B cell (primary cell): ENCODE measurements at regions of chr16 and their contacts with region 1.

Region 1: DNA sequence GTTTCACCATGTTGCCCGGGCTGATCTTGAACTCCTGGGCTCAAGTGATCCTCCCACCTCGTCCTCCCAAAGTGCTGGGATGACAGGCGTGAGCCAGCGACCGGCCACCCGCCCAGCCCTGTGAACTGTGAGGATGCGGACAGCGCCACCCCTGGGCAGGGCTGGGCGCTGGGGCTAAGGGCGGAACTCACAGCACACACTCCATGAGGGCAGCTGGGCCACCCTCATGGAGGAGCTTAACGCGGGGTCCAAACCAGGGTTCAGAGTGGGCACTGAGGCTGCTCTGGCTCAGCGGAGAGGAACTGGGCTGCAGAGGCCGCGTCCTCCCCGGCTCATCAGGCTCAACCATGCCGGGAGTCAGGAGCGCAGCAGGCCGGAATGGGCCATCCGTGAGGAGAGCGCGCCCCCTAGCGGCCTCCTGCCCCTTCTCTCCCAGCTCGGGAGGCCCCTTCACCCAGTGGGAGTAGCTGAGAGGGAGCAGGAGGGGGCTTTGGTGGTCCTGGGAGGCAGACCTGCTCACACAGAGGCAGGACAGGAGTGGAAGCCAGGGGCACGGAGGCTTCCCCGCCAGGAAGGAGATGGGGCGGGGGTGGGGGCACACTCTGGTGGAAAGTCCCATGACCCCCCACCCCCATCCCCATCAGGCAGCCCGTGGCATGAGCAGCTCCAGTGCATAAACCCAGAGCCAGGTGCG is 13.8 kb downstream of the CORO7 start:
- DNase-seq: peak; percentile 79
- ATAC-seq: peak; percentile 75
- H3K4me3 ChIP-seq: no peak overlapping the region
- H3K4me3 Mint-ChIP-seq: no peak overlapping the region
- H3K27ac ChIP-seq: no peak overlapping the region
- H3K27ac Mint-ChIP-seq: no peak overlapping the region
- H3K4me1 ChIP-seq: peaks cover 0 to 6% of the 10 kb centered on the region in 2 donors
- H3K4me1 Mint-ChIP-seq: peaks cover 10% of the 10 kb centered on the region
- H3K27me3 ChIP-seq: no peaks in the 10 kb centered on the region
- H3K27me3 Mint-ChIP-seq: no peaks in the 10 kb centered on the region
- CTCF ChIP-seq: peak; percentile 91

Region 2: DNA sequence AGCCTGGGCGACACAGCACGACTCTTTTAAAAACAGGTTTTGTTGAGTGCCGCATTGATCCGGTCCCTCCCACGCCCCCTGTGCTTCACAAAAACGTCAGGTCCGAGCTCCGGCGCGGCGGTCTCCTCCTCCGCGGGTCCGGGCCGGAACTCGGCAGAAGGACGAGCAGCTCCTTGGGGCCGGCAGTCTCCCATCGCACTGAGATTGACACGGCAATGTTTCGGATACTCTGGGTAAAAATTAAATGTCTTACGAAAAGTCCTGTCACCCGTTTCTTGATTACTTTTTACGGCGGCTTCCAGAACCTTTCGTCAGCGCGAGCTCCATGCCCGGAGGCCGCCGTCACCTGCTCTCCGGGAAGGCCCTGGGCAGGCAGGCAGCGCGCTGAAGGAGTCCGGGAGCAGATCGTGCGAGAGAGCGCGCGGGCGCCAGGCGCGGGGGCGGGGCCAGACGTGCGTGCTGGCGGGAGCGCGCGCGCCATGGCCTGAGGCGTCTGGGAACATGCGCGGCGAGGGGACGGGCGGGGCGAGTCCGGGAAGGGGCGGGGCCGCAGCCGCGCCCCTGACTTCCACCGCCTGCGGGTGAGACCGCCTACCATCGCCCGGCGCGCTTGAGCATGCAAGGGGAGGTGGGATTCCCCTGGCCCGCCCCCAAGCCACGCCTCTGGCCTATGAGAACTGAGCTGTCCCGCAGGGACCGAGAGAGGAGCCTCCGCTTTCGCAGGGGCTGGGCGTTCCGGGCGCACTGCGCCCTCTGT is 149.0 kb before region 1 on chr16:
- CTCF ChIA-PET with region 1: interaction called, 11 read pairs
- POLR2A ChIA-PET with region 1: no interaction called
- intact Hi-C with region 1: no loop called
- DNase-seq: peak; percentile 100
- ATAC-seq: peak; percentile 96
- H3K4me3 ChIP-seq: peak overlapping the region; percentile 22 to 90 (median 80)
- H3K4me3 Mint-ChIP-seq: peak overlapping the region; percentile 97
- H3K27ac ChIP-seq: peak overlapping the region; percentile 73 to 88
- H3K27ac Mint-ChIP-seq: peak overlapping the region; percentile 98
- H3K4me1 ChIP-seq: peaks cover 0 to 11% of the 10 kb centered on the region in 2 donors
- H3K4me1 Mint-ChIP-seq: peaks cover 6% of the 10 kb centered on the region
- H3K27me3 ChIP-seq: no peaks in the 10 kb centered on the region
- H3K27me3 Mint-ChIP-seq: no peaks in the 10 kb centered on the region
- CTCF ChIP-seq: no peak

Region 3: DNA sequence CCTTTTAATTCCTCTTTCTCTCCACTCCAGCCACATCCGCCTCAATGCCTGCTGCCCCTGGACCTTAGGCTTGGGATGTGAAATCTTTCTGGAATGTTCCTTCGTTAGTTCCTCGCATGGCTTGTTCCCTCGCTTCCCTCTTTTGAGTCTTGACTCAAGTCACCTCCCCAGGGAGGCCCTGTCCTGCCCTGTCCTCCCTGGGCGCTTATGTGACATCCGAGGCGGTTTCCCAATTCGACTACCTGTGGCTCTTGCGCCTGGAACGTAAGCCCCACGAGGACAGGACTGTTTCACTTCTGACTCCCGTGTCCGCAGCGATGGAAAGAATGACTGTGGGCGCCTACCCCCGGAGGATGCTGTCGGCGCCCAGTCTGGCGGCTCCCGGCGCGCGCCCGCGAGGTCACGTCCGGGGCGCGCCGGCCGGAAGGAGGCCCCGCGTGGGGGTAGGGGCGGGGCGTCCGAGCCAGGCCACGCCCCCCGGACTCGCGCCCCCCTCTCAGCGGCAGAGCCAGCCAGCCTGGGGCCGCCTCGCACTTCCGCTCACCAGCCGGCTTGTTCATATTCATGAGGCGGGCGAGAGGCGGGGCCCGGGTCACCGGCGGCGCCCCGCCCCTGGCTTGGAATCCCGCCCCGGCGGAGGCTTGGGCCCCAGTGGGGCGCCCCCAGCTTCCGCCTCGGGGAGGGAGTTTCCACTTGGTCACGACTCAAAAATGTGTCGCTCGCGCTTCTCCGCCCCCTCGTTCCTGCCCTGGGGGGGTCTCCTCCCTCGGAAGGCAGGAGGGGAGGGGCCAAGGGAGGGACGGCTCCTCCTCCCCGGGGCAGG is 95.2 kb before region 1 on chr16:
- CTCF ChIA-PET with region 1: interaction called, 29 read pairs
- POLR2A ChIA-PET with region 1: no interaction called
- intact Hi-C with region 1: no loop called
- DNase-seq: peak; percentile 98
- ATAC-seq: peak; percentile 86
- H3K4me3 ChIP-seq: peak overlapping the region; percentile 58 to 95 (median 72)
- H3K4me3 Mint-ChIP-seq: peak overlapping the region; percentile 96
- H3K27ac ChIP-seq: peak overlapping the region; percentile 89 to 91
- H3K27ac Mint-ChIP-seq: peak overlapping the region; percentile 96
- H3K4me1 ChIP-seq: peaks cover 14 to 38% of the 10 kb centered on the region in 2 donors
- H3K4me1 Mint-ChIP-seq: peaks cover 35% of the 10 kb centered on the region
- H3K27me3 ChIP-seq: peaks cover 0 to 2% (median 0%) of the 10 kb centered on the region in 4 experiments
- H3K27me3 Mint-ChIP-seq: no peaks in the 10 kb centered on the region
- CTCF ChIP-seq: no peak

Region 4: DNA sequence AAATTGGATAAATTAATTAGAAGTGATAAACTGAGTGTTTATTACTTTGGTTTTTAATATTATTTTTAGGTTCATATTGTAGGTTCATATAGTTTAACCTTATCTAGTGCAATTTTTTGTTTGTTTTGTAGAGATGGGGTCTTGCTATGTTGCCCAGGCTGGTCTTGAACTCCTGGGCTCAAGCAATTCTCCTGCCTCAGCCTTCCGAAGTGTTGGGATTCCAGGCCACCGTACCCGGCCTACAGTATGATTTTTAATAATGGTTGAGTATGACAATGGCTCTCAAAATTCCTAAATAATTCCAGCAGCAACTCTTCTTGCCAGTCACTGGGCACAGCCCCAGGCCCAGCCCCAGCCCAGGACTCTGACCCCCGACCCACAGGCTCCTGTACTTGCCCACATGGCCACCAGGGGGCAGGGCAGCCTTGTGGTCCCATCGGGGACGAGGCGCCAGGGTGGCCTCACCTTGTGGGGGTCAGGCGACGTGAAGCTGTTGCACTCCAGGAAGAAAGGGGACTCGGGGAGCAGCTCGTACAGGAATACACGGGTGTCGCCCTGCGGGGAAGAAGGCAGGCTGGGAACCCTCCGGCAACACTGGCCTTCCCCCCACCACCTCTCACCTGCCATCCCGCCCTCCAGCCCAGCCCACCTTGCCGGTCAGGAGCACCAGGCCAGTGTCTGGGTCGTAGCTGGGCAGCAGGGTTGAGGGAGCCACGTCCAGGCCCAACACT is 43.6 kb before region 1 on chr16:
- CTCF ChIA-PET with region 1: interaction called, 112 read pairs
- POLR2A ChIA-PET with region 1: interaction called, 11 read pairs
- intact Hi-C with region 1: loop called (anchors 1 kb)
- DNase-seq: peak; percentile 73
- ATAC-seq: peak; percentile 77
- H3K4me3 ChIP-seq: no peak overlapping the region
- H3K4me3 Mint-ChIP-seq: no peak overlapping the region
- H3K27ac ChIP-seq: no peak overlapping the region
- H3K27ac Mint-ChIP-seq: no peak overlapping the region
- H3K4me1 ChIP-seq: peaks cover 0 to 18% of the 10 kb centered on the region in 2 donors
- H3K4me1 Mint-ChIP-seq: peaks cover 6% of the 10 kb centered on the region
- H3K27me3 ChIP-seq: no peaks in the 10 kb centered on the region
- H3K27me3 Mint-ChIP-seq: no peaks in the 10 kb centered on the region
- CTCF ChIP-seq: peak; percentile 95

Region 5: GRCh38 chr16:4371357-4372000 is 31.1 kb before region 1 on chr16 and contains the start of gene VASN:
- CTCF ChIA-PET with region 1: interaction called, 38 read pairs
- POLR2A ChIA-PET with region 1: no interaction called
- intact Hi-C with region 1: no loop called
- DNase-seq: peak; percentile 81
- ATAC-seq: peak; percentile 87
- H3K4me3 ChIP-seq: peak within 1 kb of the TSS in 3 of 5 experiments; percentile 38 to 60 (median 47)
- H3K4me3 Mint-ChIP-seq: peak within 1 kb of the TSS; percentile 84
- H3K27ac ChIP-seq: no peak within 1 kb of the TSS
- H3K27ac Mint-ChIP-seq: no peak within 1 kb of the TSS
- H3K4me1 ChIP-seq: peaks cover 18 to 25% of the 10 kb centered on the region in 2 donors
- H3K4me1 Mint-ChIP-seq: peaks cover 29% of the 10 kb centered on the region
- H3K27me3 ChIP-seq: no peaks in the 10 kb centered on the region
- H3K27me3 Mint-ChIP-seq: no peaks in the 10 kb centered on the region
- CTCF ChIP-seq: no peak
- total RNA-seq, gene VASN: 0.66 and 0.76 TPM in 2 replicates

Region 6: GRCh38 chr16:4416200-4417032 is 13.8 kb after region 1 on chr16 and contains the start of gene CORO7:
- CTCF ChIA-PET with region 1: interaction called, 108 read pairs
- POLR2A ChIA-PET with region 1: interaction called, 3 read pairs
- intact Hi-C with region 1: no loop called
- DNase-seq: peak; percentile 99
- ATAC-seq: peak; percentile 90
- H3K4me3 ChIP-seq: peak within 1 kb of the TSS; percentile 62 to 94 (median 78)
- H3K4me3 Mint-ChIP-seq: peak within 1 kb of the TSS; percentile 96
- H3K27ac ChIP-seq: peak within 1 kb of the TSS; percentile 91 to 95
- H3K27ac Mint-ChIP-seq: peak within 1 kb of the TSS; percentile 95
- H3K4me1 ChIP-seq: peaks cover 24 to 35% of the 10 kb centered on the region in 2 donors
- H3K4me1 Mint-ChIP-seq: peaks cover 31% of the 10 kb centered on the region
- H3K27me3 ChIP-seq: no peaks in the 10 kb centered on the region
- H3K27me3 Mint-ChIP-seq: no peaks in the 10 kb centered on the region
- CTCF ChIP-seq: no peak
- total RNA-seq, gene CORO7: 114 and 117 TPM in 2 replicates

Region 7: GRCh38 chr16:4481965-4482364 is 79.4 kb after region 1 on chr16:
- CTCF ChIA-PET with region 1: no interaction called
- POLR2A ChIA-PET with region 1: no interaction called
- intact Hi-C with region 1: no loop called
- DNase-seq: no peak
- ATAC-seq: no peak
- H3K4me3 ChIP-seq: no peak overlapping the region
- H3K4me3 Mint-ChIP-seq: no peak overlapping the region
- H3K27ac ChIP-seq: peak overlapping the region in 1 of 2 donors; percentile 13
- H3K27ac Mint-ChIP-seq: no peak overlapping the region
- H3K4me1 ChIP-seq: peaks cover 6 to 11% of the 10 kb centered on the region in 2 donors
- H3K4me1 Mint-ChIP-seq: peaks cover 21% of the 10 kb centered on the region
- H3K27me3 ChIP-seq: no peaks in the 10 kb centered on the region
- H3K27me3 Mint-ChIP-seq: no peaks in the 10 kb centered on the region
- CTCF ChIP-seq: no peak

Region 8: DNA sequence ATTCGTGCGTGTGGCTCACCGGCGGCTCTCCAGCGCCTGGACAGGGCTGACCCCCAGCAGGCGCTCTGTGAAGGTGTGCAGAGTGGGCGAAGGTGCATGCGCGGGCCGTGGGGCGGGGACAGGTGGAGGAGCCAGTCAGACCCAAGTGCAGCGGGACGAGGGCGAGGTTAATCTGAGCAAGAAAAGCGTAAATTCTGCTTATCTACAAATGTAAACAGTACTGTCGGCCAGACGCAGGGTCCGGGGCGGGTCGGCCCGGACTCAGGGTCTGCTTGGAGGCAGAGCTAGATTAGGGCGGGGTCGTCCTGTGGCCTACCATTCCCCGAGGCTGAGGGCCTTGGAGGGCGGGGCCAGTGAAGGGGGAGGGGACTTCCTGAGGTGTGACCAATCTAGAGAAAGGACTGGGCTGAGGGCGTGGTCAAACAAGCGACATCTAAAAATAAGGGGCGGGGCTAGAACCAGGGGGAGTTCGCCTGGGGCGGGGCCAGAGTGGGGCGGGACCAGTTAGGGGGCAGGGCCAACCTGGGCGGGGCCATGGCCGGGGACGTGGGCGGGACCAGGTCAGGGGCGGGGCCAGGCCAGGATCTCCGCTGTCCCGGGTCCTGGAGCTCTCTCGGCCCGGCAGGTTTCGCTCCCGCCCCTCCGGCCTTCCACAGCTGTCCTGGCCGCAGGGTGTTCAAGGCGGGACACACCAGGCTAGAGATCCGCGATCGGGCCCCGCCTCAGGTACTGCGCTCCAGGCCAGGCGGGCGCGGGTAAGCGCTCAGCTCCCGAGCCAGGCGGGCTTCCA is 555.3 kb after region 1 on chr16 and contains the start of gene SEC14L5:
- CTCF ChIA-PET with region 1: interaction called, 3 read pairs
- POLR2A ChIA-PET with region 1: no interaction called
- intact Hi-C with region 1: loop called (anchors 5 kb)
- DNase-seq: peak; percentile 86
- ATAC-seq: peak; percentile 93
- H3K4me3 ChIP-seq: peak within 1 kb of the TSS in 3 of 5 experiments; percentile 37 to 47 (median 46)
- H3K4me3 Mint-ChIP-seq: peak within 1 kb of the TSS; percentile 85
- H3K27ac ChIP-seq: no peak within 1 kb of the TSS
- H3K27ac Mint-ChIP-seq: peak within 1 kb of the TSS; percentile 32
- H3K4me1 ChIP-seq: peaks cover 15% of the 10 kb centered on the region in 2 donors
- H3K4me1 Mint-ChIP-seq: peaks cover 19% of the 10 kb centered on the region
- H3K27me3 ChIP-seq: peaks cover 0 to 58% (median 23%) of the 10 kb centered on the region in 4 experiments
- H3K27me3 Mint-ChIP-seq: peaks cover 54% of the 10 kb centered on the region
- CTCF ChIP-seq: no peak
- total RNA-seq, gene SEC14L5: not detected in 2 replicates